GM12878 (cell line): ENCODE measurements at regions of chr2 and their contacts with region 1.

Region 1: GRCh38 chr2:73963385-73964120 is 21.2 kb upstream of the TET3 start:
- DNase-seq: peak; percentile 80
- ATAC-seq: peak; percentile 96
- H3K4me3 ChIP-seq: peak overlapping the region; percentile 43; the same call in 1 of the 2 replicates
- H3K27ac ChIP-seq: peak overlapping the region; percentile 88
- H3K4me1 ChIP-seq: peaks cover 20% of the 10 kb centered on the region
- H3K27me3 ChIP-seq: no peaks in the 10 kb centered on the region
- CTCF ChIP-seq: no peak
- EP300 ChIP-seq: peak in 1 of 2 experiments; percentile 18; a peak in 1 of 4 replicates
- POLR2A ChIP-seq: peak; percentile 33; the same call in 1 of the 2 replicates
- RAD21 ChIP-seq: no peak

Region 2: DNA sequence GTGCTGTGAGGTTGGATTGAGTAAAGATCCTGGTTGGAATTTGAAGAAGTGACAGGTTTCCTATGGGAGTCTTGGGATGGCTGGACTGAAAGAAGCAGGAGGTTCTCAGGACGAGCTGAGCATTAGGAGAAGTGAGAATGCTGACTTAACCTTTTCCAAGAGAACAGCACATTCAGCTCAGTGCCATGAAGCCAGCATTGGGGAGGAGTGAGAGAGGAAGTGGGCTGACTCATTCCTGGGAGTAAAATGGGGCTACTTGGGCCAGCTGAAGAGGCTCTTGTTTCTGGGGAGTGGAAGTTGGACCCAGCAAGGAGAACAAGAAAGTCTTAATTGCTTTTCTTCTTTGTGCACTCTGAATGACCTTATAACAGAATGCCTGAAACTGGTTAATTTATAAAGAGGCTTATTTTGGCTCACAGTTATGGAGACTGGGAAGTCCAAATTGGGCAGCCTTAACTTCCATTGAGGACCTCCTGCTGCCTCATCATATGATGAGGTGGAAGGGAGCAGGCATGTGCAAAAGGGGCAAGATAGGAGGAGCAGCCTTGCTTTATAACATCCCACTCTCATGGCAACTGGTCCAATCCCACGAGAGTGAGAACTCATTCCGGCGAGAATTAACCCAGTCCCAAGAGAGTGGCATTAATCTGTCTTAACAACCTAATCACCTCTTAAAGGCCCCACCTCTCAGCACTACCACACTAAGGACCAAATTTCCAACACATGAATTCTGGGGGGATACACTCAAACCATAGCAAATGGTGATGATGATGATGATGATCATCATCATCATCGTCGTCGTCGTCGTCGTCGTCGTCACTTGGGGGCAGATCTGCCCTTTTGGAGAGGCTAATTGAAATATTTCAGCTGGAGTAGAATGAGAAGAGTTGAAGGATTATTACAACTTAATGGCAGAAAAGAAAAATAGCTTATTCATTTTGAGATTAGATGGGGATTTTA is 10.8 kb before region 1 on chr2:
- CTCF ChIA-PET with region 1: interaction called, 4 read pairs
- POLR2A ChIA-PET with region 1: interaction called, 5 read pairs
- RAD21 ChIA-PET with region 1: no interaction called
- SMC1A ChIA-PET with region 1: interaction called, 10 read pairs
- in situ Hi-C with region 1: no loop called
- intact Hi-C with region 1: no loop called
- DNase-seq: no peak
- ATAC-seq: no peak
- H3K4me3 ChIP-seq: no peak overlapping the region
- H3K27ac ChIP-seq: peak overlapping the region; percentile 24; the same call in 1 of the 2 replicates
- H3K4me1 ChIP-seq: peaks cover 4% of the 10 kb centered on the region; the same call in 1 of the 2 replicates
- H3K27me3 ChIP-seq: no peaks in the 10 kb centered on the region
- CTCF ChIP-seq: no peak
- EP300 ChIP-seq: no peak
- POLR2A ChIP-seq: no peak
- RAD21 ChIP-seq: no peak

Region 3: DNA sequence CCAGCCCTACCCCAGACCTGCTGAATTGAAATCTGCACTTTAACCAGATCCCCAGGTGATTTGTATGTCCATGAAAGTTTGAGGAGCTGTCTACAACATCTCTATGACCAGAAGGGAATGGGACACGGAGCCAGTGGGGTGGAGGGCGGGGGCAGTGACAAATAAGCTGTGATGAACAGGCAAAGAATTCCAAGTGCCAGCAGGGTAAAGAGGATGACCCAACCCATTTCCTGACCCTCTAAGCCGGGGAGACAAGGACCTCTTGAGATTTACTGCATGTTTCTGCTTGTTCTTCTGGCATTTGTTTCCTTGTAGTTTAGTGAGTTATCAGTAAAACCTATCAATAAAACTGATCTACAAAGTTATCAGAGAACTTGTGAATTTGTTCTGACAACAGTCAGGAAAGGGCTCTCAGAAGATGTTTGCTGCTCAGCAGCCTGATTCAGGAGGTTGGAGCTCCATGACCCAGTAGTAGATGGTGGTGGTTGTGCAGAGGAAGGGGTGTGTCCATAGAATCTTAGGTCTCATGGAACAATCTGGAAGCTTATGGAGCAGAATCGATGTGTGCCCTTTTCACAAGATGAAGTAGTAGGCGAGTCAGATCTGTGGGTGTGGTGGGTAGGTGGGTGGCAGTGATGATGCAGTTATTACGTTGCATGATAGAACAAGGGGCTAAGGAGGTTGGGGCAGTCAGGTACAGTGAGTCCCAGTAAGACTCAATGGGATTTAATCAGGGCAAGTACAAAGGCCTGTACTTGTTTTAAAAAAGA is 30.0 kb after region 1 on chr2:
- CTCF ChIA-PET with region 1: interaction called, 11 read pairs
- POLR2A ChIA-PET with region 1: no interaction called
- RAD21 ChIA-PET with region 1: interaction called, 6 read pairs
- SMC1A ChIA-PET with region 1: interaction called, 31 read pairs
- in situ Hi-C with region 1: no loop called
- intact Hi-C with region 1: no loop called
- DNase-seq: no peak
- ATAC-seq: peak; percentile 5
- H3K4me3 ChIP-seq: peak overlapping the region; percentile 21; the same call in 1 of the 2 replicates
- H3K27ac ChIP-seq: no peak overlapping the region; the same call in 1 of the 2 replicates
- H3K4me1 ChIP-seq: peaks cover 27% of the 10 kb centered on the region
- H3K27me3 ChIP-seq: no peaks in the 10 kb centered on the region
- CTCF ChIP-seq: no peak
- EP300 ChIP-seq: no peak
- POLR2A ChIP-seq: no peak
- RAD21 ChIP-seq: no peak

Region 4: GRCh38 chr2:74080346-74080745 is 116.8 kb after region 1 on chr2:
- CTCF ChIA-PET with region 1: no interaction called
- POLR2A ChIA-PET with region 1: no interaction called
- RAD21 ChIA-PET with region 1: no interaction called
- SMC1A ChIA-PET with region 1: no interaction called
- in situ Hi-C with region 1: no loop called
- intact Hi-C with region 1: no loop called
- DNase-seq: no peak
- ATAC-seq: peak; percentile 39
- H3K4me3 ChIP-seq: no peak overlapping the region
- H3K27ac ChIP-seq: peak overlapping the region; percentile 57
- H3K4me1 ChIP-seq: peaks cover 17% of the 10 kb centered on the region
- H3K27me3 ChIP-seq: no peaks in the 10 kb centered on the region
- CTCF ChIP-seq: peak; percentile 23 to 58 (median 28); a peak in 4 of 6 replicates
- EP300 ChIP-seq: peak in 1 of 2 experiments; percentile 7; a peak in 1 of 4 replicates
- POLR2A ChIP-seq: peak; percentile 30; the same call in 1 of the 2 replicates
- RAD21 ChIP-seq: peak; percentile 78